ENCODE measurements at regions of chr6 and their contacts with region 1.

Region 1: DNA sequence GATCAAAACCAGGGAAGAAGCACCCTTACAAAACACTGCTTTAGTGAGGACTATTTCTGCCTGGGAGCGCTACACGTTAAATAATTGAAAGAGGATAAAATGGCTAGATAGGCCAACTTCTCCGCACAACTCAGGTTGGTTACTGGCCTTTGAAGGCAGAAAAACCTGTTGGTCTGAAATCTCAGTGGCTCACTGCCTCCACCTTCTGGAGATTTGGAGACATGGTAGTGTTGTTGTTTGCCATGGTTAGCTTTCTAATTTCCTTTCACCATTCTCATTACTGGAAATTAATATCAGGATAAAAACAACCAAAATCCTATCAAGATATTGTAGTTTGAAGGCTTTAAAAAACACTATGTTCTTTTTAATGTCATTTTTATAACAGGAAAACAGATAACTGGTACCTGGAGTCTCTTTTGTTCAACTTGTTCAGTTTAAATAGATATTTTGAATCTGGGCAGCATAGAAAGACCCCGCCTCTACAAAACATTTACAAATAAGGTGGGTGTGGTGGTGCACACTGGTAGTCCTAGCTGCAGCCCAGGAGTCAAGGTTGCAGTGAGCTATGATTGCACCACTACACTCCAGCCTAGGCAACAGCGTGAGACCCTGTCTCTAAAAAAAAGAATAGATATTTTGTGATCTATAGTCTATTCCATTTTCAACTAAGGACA is 27.5 kb upstream of the BCLAF1 start:
- DNase-seq: peak; percentile 59
- H3K4me3 ChIP-seq: no peak overlapping the region
- H3K27ac ChIP-seq: no peak overlapping the region
- H3K4me1 ChIP-seq: no peaks in the 10 kb centered on the region
- H3K27me3 ChIP-seq: peaks cover 4% of the 10 kb centered on the region
- CTCF ChIP-seq: peak; percentile 77

Region 2: DNA sequence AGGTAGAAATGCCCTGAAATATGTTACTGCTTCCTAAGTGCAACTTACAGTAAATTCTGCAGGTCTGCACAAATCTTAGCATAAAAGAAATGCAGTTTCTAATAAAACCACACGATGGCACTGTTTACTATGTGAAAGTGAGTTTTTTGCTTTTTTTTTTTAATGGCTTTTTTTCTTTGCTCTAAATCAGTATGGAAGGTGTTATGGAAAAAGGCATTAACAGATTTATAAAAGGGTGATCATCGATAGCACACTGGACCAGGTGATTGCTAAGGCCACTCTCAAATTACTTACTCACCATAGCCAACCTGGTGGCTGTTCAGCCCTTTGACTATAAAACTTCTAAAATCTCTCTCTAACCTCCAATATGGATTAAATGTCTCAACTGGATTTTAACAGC is 865.5 kb before region 1 on chr6:
- CTCF ChIA-PET with region 1: no interaction called
- POLR2A ChIA-PET with region 1: no interaction called
- intact Hi-C with region 1: loop called (anchors 5 kb)
- DNase-seq: peak; percentile 64
- H3K4me3 ChIP-seq: no peak overlapping the region
- H3K27ac ChIP-seq: no peak overlapping the region
- H3K4me1 ChIP-seq: no peaks in the 10 kb centered on the region
- H3K27me3 ChIP-seq: no peaks in the 10 kb centered on the region
- CTCF ChIP-seq: peak; percentile 71

Region 3: GRCh38 chr6:135895231-135895911 is 421.8 kb before region 1 on chr6:
- CTCF ChIA-PET with region 1: no interaction called
- POLR2A ChIA-PET with region 1: no interaction called
- intact Hi-C with region 1: no loop called
- DNase-seq: no peak
- H3K4me3 ChIP-seq: no peak overlapping the region
- H3K27ac ChIP-seq: no peak overlapping the region
- H3K4me1 ChIP-seq: no peaks in the 10 kb centered on the region
- H3K27me3 ChIP-seq: peaks cover 35% of the 10 kb centered on the region
- CTCF ChIP-seq: no peak

Region 4: DNA sequence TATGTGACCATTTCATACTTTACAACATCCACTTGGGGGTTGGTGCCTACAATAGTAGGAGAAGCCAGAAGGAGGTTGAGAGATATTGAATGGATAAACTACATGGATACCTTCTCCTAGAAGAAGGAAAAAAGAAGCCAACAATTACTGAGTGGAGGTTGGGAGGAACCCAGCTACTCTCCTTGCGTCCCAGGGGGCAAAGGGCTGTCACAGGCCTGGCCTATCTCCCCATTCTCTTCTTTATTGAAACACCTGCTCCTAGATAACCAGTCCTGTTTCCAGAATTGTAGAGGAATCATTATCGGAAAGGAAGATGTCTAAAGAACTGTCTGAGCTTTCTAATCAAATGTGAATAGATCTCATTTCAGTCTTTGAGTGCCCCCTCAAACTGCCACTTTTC is 117.9 kb after region 1 on chr6:
- CTCF ChIA-PET with region 1: no interaction called
- POLR2A ChIA-PET with region 1: interaction called, 13 read pairs
- intact Hi-C with region 1: no loop called
- DNase-seq: no peak
- H3K4me3 ChIP-seq: no peak overlapping the region
- H3K27ac ChIP-seq: no peak overlapping the region
- H3K4me1 ChIP-seq: no peaks in the 10 kb centered on the region
- H3K27me3 ChIP-seq: no peaks in the 10 kb centered on the region
- CTCF ChIP-seq: no peak

Region 5: GRCh38 chr6:137277971-137278637 is 960.9 kb after region 1 on chr6:
- CTCF ChIA-PET with region 1: no interaction called
- POLR2A ChIA-PET with region 1: no interaction called
- intact Hi-C with region 1: no loop called
- DNase-seq: no peak
- H3K4me3 ChIP-seq: no peak overlapping the region
- H3K27ac ChIP-seq: no peak overlapping the region
- H3K4me1 ChIP-seq: no peaks in the 10 kb centered on the region
- H3K27me3 ChIP-seq: no peaks in the 10 kb centered on the region
- CTCF ChIP-seq: no peak